Naive thymus-derived CD4-positive, alpha-beta T cell (primary cell): ENCODE measurements at regions of chr19 and their contacts with region 1.

Region 1: GRCh38 chr19:4732680-4733114 is 9.1 kb upstream of the DPP9 start:
- DNase-seq: peak in 8 of 9 donors; percentile 38 to 66 (median 54)
- ATAC-seq: peak; percentile 95
- H3K4me3 ChIP-seq: peak overlapping the region; percentile 24
- H3K4me3 Mint-ChIP-seq: peak overlapping the region in 6 of 10 donors; percentile 2 to 77 (median 35)
- H3K27ac ChIP-seq: no peak overlapping the region
- H3K27ac Mint-ChIP-seq: peak overlapping the region in 4 of 9 donors; percentile 1 to 78 (median 52)
- H3K4me1 ChIP-seq: peaks cover 3 to 4% of the 10 kb centered on the region in 2 donors
- H3K4me1 Mint-ChIP-seq: peaks cover 4 to 11% (median 6%) of the 10 kb centered on the region in 7 donors
- H3K27me3 ChIP-seq: no peaks in the 10 kb centered on the region
- H3K27me3 Mint-ChIP-seq: peaks cover 0 to 14% (median 5%) of the 10 kb centered on the region in 5 donors

Region 2: DNA sequence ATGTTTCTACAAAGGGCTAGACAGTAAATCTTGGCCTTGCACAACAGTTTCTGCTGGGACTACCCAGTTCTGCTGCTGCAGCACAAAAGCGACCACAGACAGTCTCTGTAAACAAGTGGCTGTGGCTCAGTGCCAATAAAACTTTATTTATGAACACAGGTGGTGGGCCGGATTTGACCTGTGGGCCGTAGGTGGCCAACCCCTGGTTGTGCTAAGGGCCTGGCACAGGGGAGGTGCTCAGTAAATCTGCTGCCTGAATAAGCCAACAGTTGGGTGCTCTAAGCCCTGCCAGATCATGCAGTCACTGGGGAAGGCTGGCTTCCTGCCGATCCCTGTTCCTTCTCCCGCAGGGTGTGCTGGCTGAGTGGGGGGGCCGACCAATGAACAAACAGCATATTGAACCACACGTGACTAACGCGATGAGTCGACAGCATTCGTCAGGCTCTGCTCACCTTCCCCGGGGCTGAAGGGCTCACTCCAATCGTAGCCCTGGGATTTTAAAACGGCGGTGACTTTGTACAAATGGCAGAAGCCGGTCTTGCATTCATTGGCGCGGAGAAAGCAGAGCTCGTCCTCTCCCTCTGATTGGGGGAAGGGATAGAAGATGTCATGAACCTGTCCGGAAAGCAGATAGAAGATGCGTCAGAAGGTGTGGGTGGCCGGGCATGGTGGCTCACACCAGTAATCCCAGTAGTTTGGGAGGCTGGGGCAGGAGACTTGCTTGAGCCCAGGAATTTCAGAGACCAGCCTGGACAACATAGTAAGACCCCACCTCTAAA is 38.3 kb before region 1 on chr19:
- CTCF ChIA-PET with region 1: no interaction called
- POLR2A ChIA-PET with region 1: no interaction called
- intact Hi-C with region 1: no loop called
- DNase-seq: no peak
- ATAC-seq: no peak
- H3K4me3 ChIP-seq: no peak overlapping the region
- H3K4me3 Mint-ChIP-seq: peak overlapping the region in 1 of 10 donors; percentile 18
- H3K27ac ChIP-seq: no peak overlapping the region
- H3K27ac Mint-ChIP-seq: no peak overlapping the region
- H3K4me1 ChIP-seq: no peaks in the 10 kb centered on the region
- H3K4me1 Mint-ChIP-seq: peaks cover 0 to 2% (median 0%) of the 10 kb centered on the region in 7 donors
- H3K27me3 ChIP-seq: no peaks in the 10 kb centered on the region
- H3K27me3 Mint-ChIP-seq: no peaks in the 10 kb centered on the region

Region 3: GRCh38 chr19:4803736-4804695 is 71.3 kb after region 1 on chr19:
- CTCF ChIA-PET with region 1: no interaction called
- POLR2A ChIA-PET with region 1: no interaction called
- intact Hi-C with region 1: loop called (anchors 1 kb)
- DNase-seq: peak; percentile 38 to 64 (median 54)
- ATAC-seq: peak; percentile 94
- H3K4me3 ChIP-seq: no peak overlapping the region
- H3K4me3 Mint-ChIP-seq: peak overlapping the region in 4 of 10 donors; percentile 36 to 49 (median 45)
- H3K27ac ChIP-seq: no peak overlapping the region
- H3K27ac Mint-ChIP-seq: no peak overlapping the region
- H3K4me1 ChIP-seq: no peaks in the 10 kb centered on the region
- H3K4me1 Mint-ChIP-seq: peaks cover 0 to 3% (median 0%) of the 10 kb centered on the region in 7 donors
- H3K27me3 ChIP-seq: no peaks in the 10 kb centered on the region
- H3K27me3 Mint-ChIP-seq: no peaks in the 10 kb centered on the region